A549 (cell line): ENCODE measurements at regions of chr14 and their contacts with region 1.

Region 1: GRCh38 chr14:55446218-55446654 is 5.8 kb upstream of the TBPL2 start:
- DNase-seq: peak; percentile 61 to 80
- ATAC-seq: peak; percentile 54 to 72; a peak in 5 of 6 replicates
- H3K4me3 ChIP-seq: no peak overlapping the region
- H3K27ac ChIP-seq: peak overlapping the region; percentile 71 to 88; a peak in 5 of 6 replicates
- H3K4me1 ChIP-seq: peaks cover 38% of the 10 kb centered on the region
- CTCF ChIP-seq: peak; percentile 83
- EP300 ChIP-seq: no peak
- POLR2A ChIP-seq: no peak
- RAD21 ChIP-seq: peak; percentile 81 to 88

Region 2: DNA sequence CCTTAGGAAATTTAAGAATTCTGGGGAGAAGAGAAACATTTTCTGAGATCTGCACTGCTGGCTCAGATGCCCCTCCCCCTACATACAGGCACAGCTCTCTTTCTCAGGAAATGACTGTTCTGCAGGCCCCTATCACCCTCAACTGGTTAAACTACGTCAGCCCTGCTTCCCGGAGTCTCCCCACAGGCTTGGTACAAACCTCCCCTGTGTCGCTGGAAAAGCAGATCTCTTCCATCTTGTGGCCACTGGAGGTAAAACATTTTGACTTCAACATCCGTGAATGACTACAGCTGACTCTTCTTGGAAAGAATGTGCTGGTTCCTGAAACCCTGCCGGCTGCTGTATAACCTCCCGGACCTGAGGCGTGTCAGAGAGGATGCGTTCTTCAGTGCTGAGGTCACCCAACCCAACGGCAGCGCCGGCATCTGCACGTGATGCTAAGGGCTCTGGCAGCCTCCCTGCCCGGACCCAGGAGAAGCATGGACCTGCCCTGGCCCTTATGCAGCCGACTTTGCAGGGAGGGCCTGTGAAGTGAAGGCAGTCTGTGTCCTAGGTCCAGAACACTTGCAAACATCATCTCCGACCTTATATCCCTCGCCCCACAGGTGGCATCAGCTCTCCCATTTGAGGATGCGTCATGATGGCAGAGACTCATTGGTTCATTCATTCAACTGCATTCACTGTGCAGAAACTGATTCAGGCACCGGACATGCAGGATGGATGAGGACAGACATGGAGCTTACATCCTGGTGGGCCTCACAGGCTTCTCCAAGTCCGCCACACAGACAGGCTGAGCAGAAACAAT is 672.9 kb before region 1 on chr14:
- CTCF ChIA-PET with region 1: no interaction called
- POLR2A ChIA-PET with region 1: no interaction called
- DNase-seq: peak; percentile 97 to 99
- ATAC-seq: peak; percentile 93 to 94
- H3K4me3 ChIP-seq: peak overlapping the region; percentile 2; the same call in 1 of the 3 replicates
- H3K27ac ChIP-seq: peak overlapping the region; percentile 77 to 86
- H3K4me1 ChIP-seq: peaks cover 27% of the 10 kb centered on the region
- CTCF ChIP-seq: peak; percentile 63
- EP300 ChIP-seq: peak in 1 of 2 experiments; percentile 51; a peak in 1 of 5 replicates
- POLR2A ChIP-seq: no peak
- RAD21 ChIP-seq: peak; percentile 72 to 80

Region 3: GRCh38 chr14:55430024-55430690 is 16.1 kb before region 1 on chr14:
- CTCF ChIA-PET with region 1: interaction called, 22 read pairs
- POLR2A ChIA-PET with region 1: no interaction called
- DNase-seq: peak; percentile 64 to 79
- ATAC-seq: peak; percentile 81 to 91; a peak in 5 of 6 replicates
- H3K4me3 ChIP-seq: no peak overlapping the region
- H3K27ac ChIP-seq: no peak overlapping the region
- H3K4me1 ChIP-seq: no peaks in the 10 kb centered on the region
- CTCF ChIP-seq: peak; percentile 57
- EP300 ChIP-seq: no peak
- POLR2A ChIP-seq: no peak
- RAD21 ChIP-seq: peak; percentile 61 to 62

Region 4: GRCh38 chr14:55579724-55580469 is 133.7 kb after region 1 on chr14 and contains the start of gene KTN1:
- CTCF ChIA-PET with region 1: interaction called, 4 read pairs
- POLR2A ChIA-PET with region 1: interaction called, 12 read pairs
- DNase-seq: peak; percentile 58 to 84
- ATAC-seq: peak; percentile 93 to 94
- H3K4me3 ChIP-seq: peak within 1 kb of the TSS; percentile 95
- H3K27ac ChIP-seq: peak within 1 kb of the TSS; percentile 94 to 99
- H3K4me1 ChIP-seq: peaks cover 40% of the 10 kb centered on the region
- CTCF ChIP-seq: no peak
- EP300 ChIP-seq: no peak
- POLR2A ChIP-seq: peak; percentile 76
- RAD21 ChIP-seq: peak in 1 of 2 experiments; percentile 18; a peak in 2 of 5 replicates
- polyA plus RNA-seq, gene KTN1: 118 and 233 TPM in 2 replicates

Region 5: GRCh38 chr14:55599200-55599879 is 153.1 kb after region 1 on chr14:
- CTCF ChIA-PET with region 1: interaction called, 19 read pairs
- POLR2A ChIA-PET with region 1: interaction called, 4 read pairs
- DNase-seq: peak in 1 of 2 experiments; percentile 90
- ATAC-seq: peak; percentile 63 to 92; a peak in 4 of 6 replicates
- H3K4me3 ChIP-seq: peak overlapping the region; percentile 39
- H3K27ac ChIP-seq: peak overlapping the region; percentile 77 to 88
- H3K4me1 ChIP-seq: peaks cover 63% of the 10 kb centered on the region
- CTCF ChIP-seq: no peak
- EP300 ChIP-seq: peak; percentile 56 to 74; a peak in 2 of 5 replicates
- POLR2A ChIP-seq: no peak
- RAD21 ChIP-seq: peak in 1 of 2 experiments; percentile 47; a peak in 4 of 5 replicates

Region 6: GRCh38 chr14:56474419-56475022 is 1028.3 kb after region 1 on chr14:
- CTCF ChIA-PET with region 1: interaction called, 31 read pairs
- POLR2A ChIA-PET with region 1: no interaction called
- DNase-seq: peak; percentile 19 to 37
- ATAC-seq: peak; percentile 30 to 73; a peak in 4 of 6 replicates
- H3K4me3 ChIP-seq: no peak overlapping the region
- H3K27ac ChIP-seq: no peak overlapping the region
- H3K4me1 ChIP-seq: no peaks in the 10 kb centered on the region
- CTCF ChIP-seq: peak; percentile 90
- EP300 ChIP-seq: no peak
- POLR2A ChIP-seq: no peak
- RAD21 ChIP-seq: peak; percentile 90 to 92